WTC11 (cell line): ENCODE measurements at regions of chr2 and their contacts with region 1.

Region 1: GRCh38 chr2:43609290-43609937 is 13.6 kb upstream of the THADA start:
- DNase-seq: peak; percentile 22
- ATAC-seq: peak; percentile 79
- H3K4me3 Mint-ChIP-seq: no peak overlapping the region
- H3K27ac Mint-ChIP-seq: no peak overlapping the region
- H3K4me1 Mint-ChIP-seq: peaks cover 19% of the 10 kb centered on the region
- H3K27me3 Mint-ChIP-seq: no peaks in the 10 kb centered on the region
- CTCF ChIP-seq: peak; percentile 39

Region 2: DNA sequence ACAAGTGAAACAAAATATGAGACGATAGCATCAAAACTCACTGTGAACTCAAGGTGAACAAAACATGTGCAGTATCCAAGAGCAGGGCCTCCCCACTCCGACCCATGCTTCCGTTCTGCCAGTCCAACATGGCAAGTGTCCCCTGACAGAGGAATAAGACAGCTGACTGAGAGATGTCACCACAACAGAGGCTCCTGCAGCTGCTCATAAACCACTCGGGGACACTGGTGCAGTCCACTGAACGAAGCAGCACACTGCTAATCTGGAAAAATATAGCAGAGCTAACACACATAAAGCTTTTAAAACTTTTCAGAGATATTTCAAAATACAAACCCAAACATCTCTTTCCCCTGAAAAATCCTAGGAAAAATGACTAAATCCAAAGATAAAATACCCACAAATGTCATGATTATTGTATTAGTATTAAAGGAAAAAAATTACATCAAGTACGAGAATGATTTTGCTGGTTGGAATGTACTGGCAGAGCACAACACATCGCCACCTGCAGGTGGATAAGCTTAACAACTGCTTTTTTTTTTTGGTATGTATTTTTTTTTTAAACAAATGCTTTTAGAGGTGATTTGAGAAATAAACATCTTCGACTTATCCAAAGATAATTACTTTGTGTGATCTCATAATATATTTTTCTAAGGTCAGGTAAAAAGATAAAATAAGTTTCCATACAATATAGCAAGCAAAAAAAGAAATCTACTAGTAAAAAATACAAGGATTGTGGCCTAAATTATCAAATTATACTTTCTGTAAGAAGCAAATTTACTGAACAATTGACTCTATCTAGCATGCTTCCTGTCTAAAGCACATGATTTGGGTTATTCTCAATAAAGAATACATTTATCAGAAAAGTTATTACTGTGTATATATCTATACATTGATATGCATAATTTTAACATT is 32.2 kb before region 1 on chr2:
- CTCF ChIA-PET with region 1: interaction called, 11 read pairs
- POLR2A ChIA-PET with region 1: no interaction called
- DNase-seq: no peak
- ATAC-seq: no peak
- H3K4me3 Mint-ChIP-seq: no peak overlapping the region
- H3K27ac Mint-ChIP-seq: no peak overlapping the region
- H3K4me1 Mint-ChIP-seq: no peaks in the 10 kb centered on the region
- H3K27me3 Mint-ChIP-seq: no peaks in the 10 kb centered on the region
- CTCF ChIP-seq: 0 out of 2 replicates have a peak, but pooled peaks have one; percentile 25

Region 3: GRCh38 chr2:43595603-43596412 is 13.6 kb before region 1 on chr2 and contains the start of gene THADA:
- CTCF ChIA-PET with region 1: interaction called, 32 read pairs
- POLR2A ChIA-PET with region 1: interaction called, 3 read pairs
- DNase-seq: peak; percentile 98
- ATAC-seq: peak; percentile 98
- H3K4me3 Mint-ChIP-seq: peak within 1 kb of the TSS; percentile 95
- H3K27ac Mint-ChIP-seq: peak within 1 kb of the TSS; percentile 98
- H3K4me1 Mint-ChIP-seq: peaks cover 10% of the 10 kb centered on the region
- H3K27me3 Mint-ChIP-seq: no peaks in the 10 kb centered on the region; the same call in 1 of the 2 replicates
- CTCF ChIP-seq: no peak
- total RNA-seq, gene THADA: 20.6 to 27.5 TPM (median 21.7 TPM) in 3 replicates

Region 4: DNA sequence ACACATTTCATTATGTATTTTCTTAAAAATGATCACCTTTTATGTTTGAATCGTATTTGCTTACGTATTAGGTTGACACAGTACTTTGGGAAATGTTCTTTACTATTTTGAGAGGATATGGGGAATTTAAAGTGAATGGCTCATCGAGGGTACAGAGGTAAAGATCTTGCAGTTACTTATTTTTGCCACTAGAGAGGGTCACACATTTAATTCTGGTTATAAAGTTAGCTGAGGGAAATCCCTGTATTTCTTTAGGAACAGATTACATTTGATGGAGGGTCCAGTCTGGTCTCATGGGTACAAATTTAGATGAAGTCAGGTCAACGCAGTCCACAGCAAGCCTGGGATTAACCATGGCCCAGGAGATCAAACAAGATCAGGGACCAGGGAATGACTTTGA is 188.9 kb after region 1 on chr2:
- CTCF ChIA-PET with region 1: interaction called, 13 read pairs
- POLR2A ChIA-PET with region 1: no interaction called
- DNase-seq: no peak
- ATAC-seq: peak; percentile 56
- H3K4me3 Mint-ChIP-seq: no peak overlapping the region
- H3K27ac Mint-ChIP-seq: no peak overlapping the region
- H3K4me1 Mint-ChIP-seq: no peaks in the 10 kb centered on the region
- H3K27me3 Mint-ChIP-seq: no peaks in the 10 kb centered on the region
- CTCF ChIP-seq: no peak; the same call in none of the 2 replicates

Region 5: GRCh38 chr2:43877782-43878464 is 268.5 kb after region 1 on chr2:
- CTCF ChIA-PET with region 1: interaction called, 10 read pairs
- POLR2A ChIA-PET with region 1: no interaction called
- DNase-seq: peak; percentile 88
- ATAC-seq: peak; percentile 86
- H3K4me3 Mint-ChIP-seq: no peak overlapping the region
- H3K27ac Mint-ChIP-seq: no peak overlapping the region
- H3K4me1 Mint-ChIP-seq: peaks cover 2% of the 10 kb centered on the region
- H3K27me3 Mint-ChIP-seq: peaks cover 3% of the 10 kb centered on the region; the same call in 1 of the 2 replicates
- CTCF ChIP-seq: peak; percentile 97